Heart left ventricle (tissue), 16 donors: ENCODE measurements at regions of chr1 and their contacts with region 1.

Region 1: GRCh38 chr1:228921481-228921880 is 186.2 kb downstream of the RHOU start:
- DNase-seq: no peak
- ATAC-seq: peak in 3 of 4 donors; percentile 37 to 51 (median 46)
- H3K4me3 ChIP-seq: no peak overlapping the region
- H3K27ac ChIP-seq: peak overlapping the region in 1 of 12 donors; percentile 47
- H3K4me1 ChIP-seq: peaks cover 0 to 24% (median 0%) of the 10 kb centered on the region in 12 donors
- H3K27me3 ChIP-seq: no peaks in the 10 kb centered on the region
- CTCF ChIP-seq: no peak
- POLR2A ChIP-seq: no peak

Region 2: GRCh38 chr1:228751360-228752113 is 169.9 kb before region 1 on chr1:
- intact Hi-C with region 1: loop called in 1 of 10 experiments (anchors 10 kb)
- DNase-seq: no peak
- ATAC-seq: no peak
- H3K4me3 ChIP-seq: no peak overlapping the region
- H3K27ac ChIP-seq: no peak overlapping the region
- H3K4me1 ChIP-seq: peaks cover 0 to 13% (median 1%) of the 10 kb centered on the region in 12 donors
- H3K27me3 ChIP-seq: peaks cover 0 to 47% (median 19%) of the 10 kb centered on the region in 9 donors
- CTCF ChIP-seq: no peak
- POLR2A ChIP-seq: no peak

Region 3: GRCh38 chr1:228867108-228867950 is 54.2 kb before region 1 on chr1:
- intact Hi-C with region 1: no loop called
- DNase-seq: no peak
- ATAC-seq: no peak
- H3K4me3 ChIP-seq: no peak overlapping the region
- H3K27ac ChIP-seq: no peak overlapping the region
- H3K4me1 ChIP-seq: peaks cover 0 to 8% (median 0%) of the 10 kb centered on the region in 12 donors
- H3K27me3 ChIP-seq: peaks cover 0 to 6% (median 0%) of the 10 kb centered on the region in 9 donors
- CTCF ChIP-seq: no peak
- POLR2A ChIP-seq: no peak